ENCODE measurements at regions of chr3 and their contacts with region 1.

Region 1: GRCh38 chr3:49028673-49029562 is at the start of gene IMPDH2:
- DNase-seq: peak; percentile 86 to 98 (median 92)
- ATAC-seq: peak; percentile 96
- H3K4me3 ChIP-seq: peak within 1 kb of the TSS; percentile 82
- H3K4me3 Mint-ChIP-seq: peak within 1 kb of the TSS; percentile 88
- H3K27ac ChIP-seq: peak within 1 kb of the TSS; percentile 87 to 94
- H3K27ac Mint-ChIP-seq: peak within 1 kb of the TSS; percentile 93
- H3K4me1 ChIP-seq: peaks cover 36% of the 10 kb centered on the region
- H3K4me1 Mint-ChIP-seq: peaks cover 31% of the 10 kb centered on the region
- H3K27me3 ChIP-seq: no peaks in the 10 kb centered on the region
- H3K27me3 Mint-ChIP-seq: no peaks in the 10 kb centered on the region
- CTCF ChIP-seq: no peak
- total RNA-seq, gene IMPDH2: 133 to 135 TPM

Region 2: DNA sequence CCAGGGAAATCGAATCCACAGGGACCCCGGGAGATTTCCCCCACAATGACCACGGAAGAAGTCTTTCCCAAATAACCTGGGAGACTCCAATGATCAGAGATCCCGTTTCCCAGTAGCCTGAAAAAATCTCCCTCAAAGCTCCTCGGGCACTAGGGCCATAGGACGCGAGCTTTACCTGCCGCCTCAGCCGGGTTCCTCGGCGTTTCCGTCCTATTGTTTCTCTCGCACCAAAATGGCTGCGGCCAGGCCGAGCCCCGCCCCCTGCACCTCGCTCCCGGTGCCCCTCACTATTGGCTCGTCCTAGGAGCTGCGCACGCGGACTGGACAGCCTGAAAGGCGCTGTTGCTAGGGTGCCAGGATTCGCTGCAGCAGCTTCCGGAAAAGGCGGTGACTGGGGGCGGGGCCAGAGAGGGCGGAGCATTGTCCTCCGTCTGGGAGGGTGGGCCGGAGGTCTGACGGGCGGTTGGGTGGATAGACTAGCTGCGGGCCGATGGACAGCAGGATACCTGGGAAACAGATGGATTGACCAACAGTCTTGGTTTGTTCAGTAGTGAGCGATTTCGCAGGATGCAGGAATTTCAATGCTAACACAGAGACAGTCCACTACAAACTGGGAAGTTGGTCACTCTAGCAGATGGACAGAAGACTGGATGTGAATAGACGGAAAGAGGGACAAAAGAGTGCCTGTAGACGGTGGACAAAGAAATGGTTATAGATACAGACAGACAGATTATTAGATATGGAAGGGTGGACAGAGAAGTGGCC is 311.8 kb before region 1 on chr3 and contains the start of gene IP6K2:
- CTCF ChIA-PET with region 1: no interaction called
- POLR2A ChIA-PET with region 1: interaction called, 6 read pairs
- intact Hi-C with region 1: loop called in 1 of 2 experiments (anchors 5 kb)
- DNase-seq: peak; percentile 97 to 99 (median 98)
- ATAC-seq: peak; percentile 99
- H3K4me3 ChIP-seq: peak within 1 kb of the TSS; percentile 89
- H3K4me3 Mint-ChIP-seq: peak within 1 kb of the TSS; percentile 96
- H3K27ac ChIP-seq: peak within 1 kb of the TSS; percentile 77 to 88
- H3K27ac Mint-ChIP-seq: peak within 1 kb of the TSS; percentile 88
- H3K4me1 ChIP-seq: peaks cover 38% of the 10 kb centered on the region
- H3K4me1 Mint-ChIP-seq: peaks cover 43% of the 10 kb centered on the region
- H3K27me3 ChIP-seq: no peaks in the 10 kb centered on the region
- H3K27me3 Mint-ChIP-seq: no peaks in the 10 kb centered on the region
- CTCF ChIP-seq: no peak
- total RNA-seq, gene IP6K2: 97.2 to 121 TPM

Region 3: GRCh38 chr3:48984663-48985062 is 44.3 kb before region 1 on chr3:
- CTCF ChIA-PET with region 1: interaction called, 63 read pairs
- POLR2A ChIA-PET with region 1: interaction called, 43 read pairs
- intact Hi-C with region 1: loop called (anchors 2 kb)
- DNase-seq: no peak
- ATAC-seq: no peak
- H3K4me3 ChIP-seq: no peak overlapping the region
- H3K4me3 Mint-ChIP-seq: no peak overlapping the region
- H3K27ac ChIP-seq: no peak overlapping the region
- H3K27ac Mint-ChIP-seq: peak overlapping the region; percentile 4
- H3K4me1 ChIP-seq: peaks cover 20% of the 10 kb centered on the region
- H3K4me1 Mint-ChIP-seq: peaks cover 16% of the 10 kb centered on the region
- H3K27me3 ChIP-seq: no peaks in the 10 kb centered on the region
- H3K27me3 Mint-ChIP-seq: no peaks in the 10 kb centered on the region
- CTCF ChIP-seq: no peak

Region 4: GRCh38 chr3:49007068-49007770 is 21.7 kb before region 1 on chr3 and contains the start of gene WDR6:
- CTCF ChIA-PET with region 1: interaction called, 59 read pairs
- POLR2A ChIA-PET with region 1: interaction called, 331 read pairs
- intact Hi-C with region 1: loop called in 1 of 2 experiments (anchors 1 kb)
- DNase-seq: peak; percentile 93 to 99 (median 96)
- ATAC-seq: peak; percentile 86
- H3K4me3 ChIP-seq: peak within 1 kb of the TSS; percentile 99
- H3K4me3 Mint-ChIP-seq: peak within 1 kb of the TSS; percentile 99
- H3K27ac ChIP-seq: peak within 1 kb of the TSS; percentile 89 to 99
- H3K27ac Mint-ChIP-seq: peak within 1 kb of the TSS; percentile 97
- H3K4me1 ChIP-seq: peaks cover 25% of the 10 kb centered on the region
- H3K4me1 Mint-ChIP-seq: peaks cover 27% of the 10 kb centered on the region
- H3K27me3 ChIP-seq: no peaks in the 10 kb centered on the region
- H3K27me3 Mint-ChIP-seq: no peaks in the 10 kb centered on the region
- CTCF ChIP-seq: peak; percentile 19
- total RNA-seq, gene WDR6: 132 to 134 TPM

Region 5: DNA sequence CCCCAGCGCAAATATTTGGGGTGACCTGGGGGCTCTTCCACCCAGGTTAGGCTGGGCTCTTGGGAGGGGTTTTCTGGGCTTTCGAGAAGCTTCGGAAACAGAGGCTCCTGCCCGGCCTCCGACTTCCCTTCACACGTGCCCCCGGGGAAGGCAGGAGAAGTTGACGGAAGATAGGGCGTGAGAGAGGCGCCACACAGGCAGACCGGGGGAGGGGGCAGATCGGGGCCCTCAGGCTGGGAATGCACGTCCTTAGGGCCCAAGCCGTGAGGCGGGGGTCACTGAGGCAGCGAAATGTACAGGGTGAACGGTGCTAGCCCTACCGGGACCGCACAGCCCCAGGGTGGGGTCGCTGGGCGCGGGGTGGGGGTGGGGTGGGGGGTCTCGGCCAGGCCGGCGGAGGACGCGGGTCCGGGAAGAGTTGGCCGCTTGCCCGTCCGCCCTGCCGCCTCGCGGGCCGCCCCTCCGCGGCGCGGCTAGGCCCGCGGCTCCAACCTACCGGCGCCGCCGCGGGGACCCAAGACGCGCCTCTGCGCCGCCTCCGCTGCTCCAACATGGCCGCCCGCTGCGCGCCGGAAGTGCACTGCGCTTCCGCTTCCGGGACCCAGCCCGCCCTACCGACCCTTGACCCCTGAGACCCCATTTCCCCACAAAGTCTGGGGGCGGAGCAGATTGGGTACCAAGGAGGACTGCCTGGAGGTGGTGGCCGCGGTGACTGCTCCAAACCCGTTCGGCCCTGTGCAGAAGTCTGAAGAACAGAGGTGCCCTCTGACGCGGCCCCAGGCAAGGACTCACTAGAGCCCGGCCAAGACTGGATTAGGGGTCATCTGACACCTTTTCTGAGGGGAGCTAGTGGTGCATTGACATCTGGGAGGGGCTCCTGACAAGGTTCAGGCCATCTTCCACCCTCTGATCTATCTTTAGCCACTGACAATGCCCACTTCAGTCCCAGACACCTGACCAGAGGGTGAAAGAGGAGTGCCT is 137.1 kb after region 1 on chr3 and contains the start of gene CCDC71:
- CTCF ChIA-PET with region 1: no interaction called
- POLR2A ChIA-PET with region 1: interaction called, 3 read pairs
- intact Hi-C with region 1: loop called in 1 of 2 experiments (anchors 5 kb)
- DNase-seq: peak; percentile 55 to 89 (median 70)
- ATAC-seq: peak; percentile 80
- H3K4me3 ChIP-seq: peak within 1 kb of the TSS; percentile 94
- H3K4me3 Mint-ChIP-seq: peak within 1 kb of the TSS; percentile 97
- H3K27ac ChIP-seq: peak within 1 kb of the TSS; percentile 48 to 61
- H3K27ac Mint-ChIP-seq: peak within 1 kb of the TSS; percentile 91
- H3K4me1 ChIP-seq: peaks cover 31% of the 10 kb centered on the region
- H3K4me1 Mint-ChIP-seq: peaks cover 44% of the 10 kb centered on the region
- H3K27me3 ChIP-seq: no peaks in the 10 kb centered on the region
- H3K27me3 Mint-ChIP-seq: no peaks in the 10 kb centered on the region
- CTCF ChIP-seq: no peak
- total RNA-seq, gene CCDC71: 14.7 to 16.0 TPM